PC-3 (cell line): ENCODE measurements at regions of chr13 and their contacts with region 1.

Region 1: DNA sequence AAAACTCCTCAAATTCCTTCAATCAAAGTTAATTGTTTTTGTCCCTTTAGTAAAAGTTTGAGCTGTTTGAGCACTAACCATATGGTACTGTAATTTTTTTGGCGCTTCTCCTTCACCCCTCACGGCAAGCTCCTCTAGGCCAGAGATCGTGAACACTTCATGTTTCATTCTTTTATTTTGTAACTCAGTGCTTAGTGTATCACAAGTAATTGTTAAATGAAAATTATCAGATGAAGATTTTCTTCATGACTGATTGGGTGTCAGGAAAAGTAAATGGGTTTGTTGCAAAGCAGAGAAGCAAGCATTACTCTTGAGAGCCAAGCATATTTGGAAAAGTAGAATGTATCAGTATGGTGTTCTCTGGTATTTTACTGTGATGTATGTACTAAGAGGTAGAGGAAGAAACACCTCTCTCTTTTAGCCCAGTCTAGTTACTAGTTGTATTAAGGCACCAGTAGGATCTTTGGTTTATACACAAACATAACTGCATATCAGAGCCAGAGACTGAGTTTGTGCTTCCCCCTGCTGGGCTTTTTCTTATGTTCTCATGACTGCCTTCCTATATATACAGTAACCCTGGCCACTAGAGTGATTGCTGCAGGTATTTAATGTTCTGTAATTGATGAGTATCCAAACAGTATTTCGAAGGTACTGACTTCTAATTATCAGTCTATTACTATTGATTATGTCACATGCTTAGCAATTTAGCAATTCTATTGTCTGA is 202.3 kb upstream of the KLHL1 start:
- DNase-seq: peak; percentile 63
- ATAC-seq: peak; percentile 99
- H3K4me3 ChIP-seq: no peak overlapping the region
- H3K27ac ChIP-seq: no peak overlapping the region
- H3K4me1 ChIP-seq: no peaks in the 10 kb centered on the region
- H3K27me3 ChIP-seq: no peaks in the 10 kb centered on the region
- CTCF ChIP-seq: peak; percentile 62

Region 2: GRCh38 chr13:69857183-69857821 is 453.3 kb before region 1 on chr13:
- CTCF ChIA-PET with region 1: no interaction called
- POLR2A ChIA-PET with region 1: no interaction called
- intact Hi-C with region 1: loop called (anchors 5 kb)
- DNase-seq: peak; percentile 66
- ATAC-seq: peak; percentile 65
- H3K4me3 ChIP-seq: no peak overlapping the region
- H3K27ac ChIP-seq: no peak overlapping the region
- H3K4me1 ChIP-seq: no peaks in the 10 kb centered on the region
- H3K27me3 ChIP-seq: no peaks in the 10 kb centered on the region
- CTCF ChIP-seq: peak; percentile 67

Region 3: GRCh38 chr13:70098669-70099068 is 211.9 kb before region 1 on chr13:
- CTCF ChIA-PET with region 1: interaction called, 3 read pairs
- POLR2A ChIA-PET with region 1: no interaction called
- intact Hi-C with region 1: loop called (anchors 1 kb)
- DNase-seq: peak; percentile 41
- ATAC-seq: 0 out of 2 replicates have a peak, but pooled peaks have one; percentile 59
- H3K4me3 ChIP-seq: no peak overlapping the region
- H3K27ac ChIP-seq: no peak overlapping the region
- H3K4me1 ChIP-seq: no peaks in the 10 kb centered on the region
- H3K27me3 ChIP-seq: no peaks in the 10 kb centered on the region
- CTCF ChIP-seq: peak; percentile 52

Region 4: GRCh38 chr13:70249332-70250064 is 61.1 kb before region 1 on chr13:
- CTCF ChIA-PET with region 1: no interaction called
- POLR2A ChIA-PET with region 1: no interaction called
- intact Hi-C with region 1: no loop called
- DNase-seq: peak; percentile 78
- ATAC-seq: peak; percentile 99
- H3K4me3 ChIP-seq: no peak overlapping the region
- H3K27ac ChIP-seq: peak overlapping the region; percentile 85
- H3K4me1 ChIP-seq: peaks cover 15% of the 10 kb centered on the region
- H3K27me3 ChIP-seq: no peaks in the 10 kb centered on the region
- CTCF ChIP-seq: no peak